ENCODE measurements at regions of chr3 and their contacts with region 1.

Region 1: DNA sequence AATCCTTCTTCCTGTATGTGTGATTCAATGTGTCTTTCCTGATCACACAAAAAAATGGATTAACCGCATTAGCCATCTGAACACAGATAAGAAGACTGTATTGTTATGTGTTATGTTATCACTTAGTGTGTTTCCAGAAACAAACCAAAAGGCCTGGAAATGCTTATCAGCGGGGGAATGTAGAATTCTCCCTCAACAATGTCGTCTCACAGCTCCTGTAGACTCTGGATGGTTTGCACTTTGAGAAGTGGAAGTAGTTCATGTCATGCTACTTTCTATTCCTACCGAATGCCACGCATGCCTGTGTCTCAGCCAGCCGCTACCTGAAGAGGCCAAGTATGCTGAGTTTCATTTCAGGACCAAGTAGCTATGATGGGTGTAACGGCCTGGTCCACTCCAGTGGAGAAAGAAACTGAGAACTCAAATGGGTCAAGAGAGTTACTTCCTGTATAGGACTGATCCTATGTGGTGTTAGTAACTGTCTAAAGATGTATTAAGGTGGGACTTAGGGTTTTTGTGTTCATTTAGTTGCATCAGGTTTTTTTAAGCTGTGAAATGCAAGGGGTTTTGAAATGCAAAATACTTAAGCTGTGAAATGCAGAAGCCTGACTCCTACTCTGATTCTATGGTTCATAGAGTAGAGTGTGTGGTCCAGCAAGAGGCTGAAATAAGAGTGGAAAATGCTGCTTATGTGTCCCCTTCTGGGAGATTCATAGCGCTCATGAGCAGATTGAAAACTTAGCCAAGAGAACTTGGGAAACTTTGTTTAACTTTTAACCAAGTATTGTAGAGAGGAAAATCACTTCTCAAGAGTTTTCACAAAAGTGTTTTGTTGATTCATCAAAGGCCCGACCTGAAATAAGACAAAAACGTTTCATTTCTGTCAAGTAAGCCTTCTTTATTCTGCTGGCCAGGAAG is 118.5 kb upstream of the LMOD3 start:
- DNase-seq: no peak
- ATAC-seq: no peak

Region 2: GRCh38 chr3:69200384-69201068 is 40.4 kb before region 1 on chr3:
- intact Hi-C with region 1: loop called in 1 of 2 experiments (anchors 5 kb)
- DNase-seq: peak; percentile 37
- ATAC-seq: peak; percentile 76 to 86